B cell (primary cell): ENCODE measurements at regions of chrX and their contacts with region 1.

Region 1: DNA sequence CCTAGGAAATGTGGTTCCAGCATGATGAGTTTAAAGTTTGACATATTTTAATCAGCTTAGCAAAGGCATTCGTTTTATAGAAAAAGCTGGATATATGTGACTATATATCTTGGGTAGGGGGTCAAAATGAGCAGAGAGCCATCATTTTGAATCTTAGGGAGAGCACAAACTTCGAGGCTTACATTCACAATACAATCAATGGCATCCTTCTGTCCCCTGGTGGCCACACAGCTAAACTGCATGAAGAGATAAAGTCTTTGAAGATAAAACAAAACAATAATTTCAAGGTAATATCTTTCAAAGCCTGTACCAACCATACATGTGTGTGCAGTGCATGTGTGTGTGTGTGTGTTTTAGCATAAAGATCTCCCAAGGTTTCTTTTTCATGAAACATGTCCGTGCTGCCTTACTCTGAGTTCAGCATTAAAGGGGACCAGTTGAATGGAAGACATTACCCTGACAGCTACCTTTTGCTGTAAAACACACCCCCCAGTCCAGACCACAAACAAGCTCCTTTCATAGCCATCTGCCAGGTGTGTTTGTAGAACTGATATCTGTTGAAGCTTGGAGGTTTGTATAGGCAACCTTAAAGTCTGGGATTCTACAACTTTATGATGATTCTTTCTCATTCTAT is 22.0 kb downstream of the DYNLT3 start:
- DNase-seq: peak; percentile 68
- ATAC-seq: peak; percentile 87
- H3K4me3 ChIP-seq: peak overlapping the region in 1 of 5 experiments; percentile 24
- H3K4me3 Mint-ChIP-seq: peak overlapping the region; percentile 21
- H3K27ac ChIP-seq: no peak overlapping the region
- H3K27ac Mint-ChIP-seq: peak overlapping the region; percentile 85
- H3K4me1 ChIP-seq: peaks cover 23 to 26% of the 10 kb centered on the region in 2 donors
- H3K4me1 Mint-ChIP-seq: peaks cover 49% of the 10 kb centered on the region
- H3K27me3 ChIP-seq: no peaks in the 10 kb centered on the region
- H3K27me3 Mint-ChIP-seq: no peaks in the 10 kb centered on the region
- CTCF ChIP-seq: peak; percentile 78

Region 2: DNA sequence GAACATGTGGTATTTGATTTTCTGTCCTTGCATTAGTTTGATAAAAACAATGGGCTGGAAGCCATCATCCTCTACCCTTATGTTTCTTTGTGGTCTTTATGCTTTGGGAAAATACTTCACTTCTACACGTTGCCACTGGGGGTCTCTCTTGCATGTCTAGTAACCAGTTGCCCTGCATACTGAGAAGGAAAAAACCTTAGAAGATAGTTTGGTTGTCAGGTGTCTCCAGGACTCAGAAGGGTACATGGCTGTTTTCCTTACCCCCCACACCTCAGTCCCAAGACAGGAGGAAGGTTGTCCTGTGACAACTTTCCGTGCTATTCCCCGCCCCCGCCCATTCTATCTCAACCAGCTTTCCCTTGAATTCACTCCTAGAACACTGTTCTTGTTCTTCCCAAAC is 316.0 kb before region 1 on chrX:
- CTCF ChIA-PET with region 1: no interaction called
- POLR2A ChIA-PET with region 1: no interaction called
- intact Hi-C with region 1: loop called (anchors 2 kb)
- DNase-seq: peak; percentile 8
- ATAC-seq: no peak
- H3K4me3 ChIP-seq: no peak overlapping the region
- H3K4me3 Mint-ChIP-seq: no peak overlapping the region
- H3K27ac ChIP-seq: no peak overlapping the region
- H3K27ac Mint-ChIP-seq: no peak overlapping the region
- H3K4me1 ChIP-seq: no peaks in the 10 kb centered on the region
- H3K4me1 Mint-ChIP-seq: no peaks in the 10 kb centered on the region
- H3K27me3 ChIP-seq: peaks cover 0 to 3% (median 0%) of the 10 kb centered on the region in 4 experiments
- H3K27me3 Mint-ChIP-seq: peaks cover 7% of the 10 kb centered on the region
- CTCF ChIP-seq: peak; percentile 29

Region 3: DNA sequence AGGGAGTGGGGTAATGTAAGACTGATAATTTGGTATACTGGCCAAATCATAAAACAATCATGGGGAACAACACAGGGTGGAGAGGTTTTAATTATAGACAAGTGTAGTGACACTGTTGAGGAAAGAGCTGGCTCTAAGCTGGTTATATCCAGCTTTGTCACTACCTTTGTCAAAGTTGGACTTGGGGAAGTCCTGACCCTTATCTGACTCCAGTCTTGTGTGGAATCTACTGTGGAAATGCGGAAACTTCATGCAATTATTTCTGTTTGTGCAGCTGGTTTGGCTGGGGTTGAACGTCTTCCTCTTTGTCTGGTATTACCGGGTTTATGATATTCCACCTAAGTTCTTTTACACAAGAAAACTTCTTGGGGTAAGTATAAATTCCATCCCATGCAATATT is 43.5 kb before region 1 on chrX:
- CTCF ChIA-PET with region 1: interaction called, 22 read pairs
- POLR2A ChIA-PET with region 1: interaction called, 7 read pairs
- intact Hi-C with region 1: no loop called
- DNase-seq: no peak
- ATAC-seq: no peak
- H3K4me3 ChIP-seq: peak overlapping the region; percentile 52 to 89 (median 60)
- H3K4me3 Mint-ChIP-seq: peak overlapping the region; percentile 96
- H3K27ac ChIP-seq: peak overlapping the region; percentile 38 to 71
- H3K27ac Mint-ChIP-seq: peak overlapping the region; percentile 92
- H3K4me1 ChIP-seq: peaks cover 59 to 61% of the 10 kb centered on the region in 2 donors
- H3K4me1 Mint-ChIP-seq: peaks cover 60% of the 10 kb centered on the region
- H3K27me3 ChIP-seq: no peaks in the 10 kb centered on the region
- H3K27me3 Mint-ChIP-seq: no peaks in the 10 kb centered on the region
- CTCF ChIP-seq: no peak

Region 4: DNA sequence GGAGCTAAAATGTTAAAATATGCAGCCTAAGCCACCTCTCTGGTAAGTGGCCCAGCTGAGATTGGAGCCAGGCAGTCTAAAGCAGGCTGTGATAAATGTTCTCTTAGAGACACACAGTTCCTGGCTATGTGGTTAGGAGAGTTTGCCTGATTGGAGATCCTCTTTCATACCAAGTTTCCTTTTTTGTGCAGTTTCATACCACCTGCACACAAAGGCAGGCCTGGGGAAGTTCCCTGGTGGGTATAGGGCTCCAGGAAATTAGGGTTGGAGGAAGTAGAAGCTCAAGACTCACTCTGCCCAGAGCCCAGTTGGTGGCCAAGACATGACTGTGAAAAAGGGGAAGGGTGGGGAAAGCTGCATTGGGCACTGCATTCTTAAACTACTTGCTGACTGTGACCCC is 28.5 kb before region 1 on chrX:
- CTCF ChIA-PET with region 1: interaction called, 18 read pairs
- POLR2A ChIA-PET with region 1: no interaction called
- intact Hi-C with region 1: no loop called
- DNase-seq: peak; percentile 76
- ATAC-seq: peak; percentile 90
- H3K4me3 ChIP-seq: peak overlapping the region in 1 of 5 experiments; percentile 21
- H3K4me3 Mint-ChIP-seq: peak overlapping the region; percentile 42
- H3K27ac ChIP-seq: peak overlapping the region in 1 of 2 donors; percentile 61
- H3K27ac Mint-ChIP-seq: peak overlapping the region; percentile 76
- H3K4me1 ChIP-seq: peaks cover 53 to 60% of the 10 kb centered on the region in 2 donors
- H3K4me1 Mint-ChIP-seq: peaks cover 67% of the 10 kb centered on the region
- H3K27me3 ChIP-seq: no peaks in the 10 kb centered on the region
- H3K27me3 Mint-ChIP-seq: no peaks in the 10 kb centered on the region
- CTCF ChIP-seq: no peak

Region 5: GRCh38 chrX:38166478-38167083 is 341.3 kb after region 1 on chrX:
- CTCF ChIA-PET with region 1: interaction called, 10 read pairs
- POLR2A ChIA-PET with region 1: no interaction called
- intact Hi-C with region 1: loop called (anchors 1 kb)
- DNase-seq: peak; percentile 37
- ATAC-seq: no peak
- H3K4me3 ChIP-seq: no peak overlapping the region
- H3K4me3 Mint-ChIP-seq: no peak overlapping the region
- H3K27ac ChIP-seq: no peak overlapping the region
- H3K27ac Mint-ChIP-seq: no peak overlapping the region
- H3K4me1 ChIP-seq: no peaks in the 10 kb centered on the region
- H3K4me1 Mint-ChIP-seq: no peaks in the 10 kb centered on the region
- H3K27me3 ChIP-seq: no peaks in the 10 kb centered on the region
- H3K27me3 Mint-ChIP-seq: peaks cover 3% of the 10 kb centered on the region
- CTCF ChIP-seq: peak; percentile 65